Head of caudate nucleus (tissue), 42 donors: ENCODE measurements at regions of chr16 and their contacts with region 1.

Region 1: DNA sequence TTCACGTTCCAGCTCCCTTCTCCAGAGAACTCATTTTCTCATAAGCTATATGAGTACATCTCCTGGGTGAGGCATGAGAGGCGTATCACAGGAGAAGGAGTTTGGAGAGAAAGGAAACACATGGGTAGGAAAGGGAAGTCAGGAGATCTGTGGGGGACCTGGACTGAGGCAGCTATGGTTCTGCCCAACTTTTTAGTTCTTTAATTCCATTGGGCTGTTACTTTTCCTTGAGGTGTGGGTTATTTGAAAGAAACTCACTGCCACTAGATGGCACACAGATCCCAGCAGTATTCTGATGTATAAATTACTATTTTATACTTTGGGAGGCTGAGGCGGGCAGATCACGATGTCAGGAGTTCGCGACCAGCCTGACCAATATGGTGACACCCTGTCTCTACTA is 63.6 kb downstream of the NUP93 start:
- DNase-seq: peak in 9 of 42 donors; percentile 10 to 54 (median 24)

Region 2: DNA sequence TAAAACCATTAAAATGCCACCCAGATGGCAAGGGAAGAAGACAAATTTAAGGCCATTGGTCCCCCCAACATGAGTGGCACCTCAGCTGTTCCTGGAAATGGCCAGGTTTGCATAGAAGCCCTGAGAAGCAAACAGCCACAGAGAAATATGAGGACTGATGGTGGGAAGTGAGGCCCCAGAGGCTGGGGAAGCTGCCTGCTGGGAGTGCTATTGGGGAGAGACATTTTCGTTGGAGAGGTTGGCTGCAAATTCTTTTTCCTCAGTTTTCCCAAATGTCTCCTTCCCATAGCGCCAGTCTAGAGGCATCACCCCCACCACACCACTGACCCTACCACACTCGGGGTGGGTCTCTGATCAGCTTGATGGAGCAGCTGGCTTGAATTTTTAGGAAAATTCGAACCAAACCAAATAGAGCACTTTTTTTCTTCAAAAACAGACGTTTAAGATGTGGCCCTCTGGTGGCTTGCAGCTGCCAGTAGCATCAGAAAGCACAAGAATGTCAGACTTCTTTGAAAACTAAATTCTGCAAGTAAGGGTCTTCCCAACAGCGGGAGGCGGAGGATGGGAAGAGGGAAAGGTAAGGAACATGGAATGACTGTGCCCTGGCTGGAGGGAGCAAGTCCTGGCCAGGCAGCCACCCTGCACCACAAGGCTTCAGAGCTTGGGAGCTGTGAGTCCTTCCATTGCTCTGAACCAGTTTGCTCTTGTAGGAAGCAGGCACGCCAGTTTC is 58.3 kb after region 1 on chr16:
- intact Hi-C with region 1: loop called (anchors 10 kb)
- DNase-seq: peak in 5 of 42 donors; percentile 25 to 57 (median 42)